ENCODE measurements at regions of chr5 and their contacts with region 1.

Region 1: DNA sequence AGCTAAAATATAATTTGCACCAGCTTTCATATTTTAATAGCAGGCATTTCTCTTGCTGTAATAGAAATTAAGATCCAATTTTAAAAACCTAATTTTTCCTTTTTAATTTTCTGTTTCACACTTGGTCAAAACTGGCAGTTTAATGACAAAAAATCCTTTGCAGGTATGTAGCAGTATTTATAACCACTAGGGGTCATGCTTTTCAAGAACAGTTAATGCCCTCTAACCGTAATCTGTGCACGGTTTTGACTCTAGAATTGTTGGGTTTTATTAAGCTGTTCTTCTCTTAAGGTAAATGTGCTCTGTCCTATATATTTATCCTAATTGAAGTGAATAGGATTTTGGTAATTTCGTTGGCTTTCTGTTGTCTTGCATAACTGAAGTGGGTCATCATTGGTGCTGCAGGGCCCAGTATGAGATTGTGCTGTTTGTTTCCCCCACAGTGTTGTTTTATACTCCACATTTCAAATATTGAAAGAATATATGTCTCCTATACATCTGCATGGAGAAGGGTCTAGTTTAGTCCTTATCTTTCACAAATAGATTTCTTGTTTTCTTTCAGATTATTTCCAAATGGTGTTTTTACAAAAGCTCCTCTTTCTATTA is 107.4 kb downstream of the SCAMP1 start:
- DNase-seq: no peak

Region 2: GRCh38 chr5:78359831-78360673 is 107.8 kb before region 1 on chr5 and contains the start of gene SCAMP1:
- intact Hi-C with region 1: loop called (anchors 10 kb)
- DNase-seq: peak; percentile 97
- total RNA-seq, gene SCAMP1: 29.1 TPM

Region 3: GRCh38 chr5:78377056-78377717 is 90.7 kb before region 1 on chr5:
- intact Hi-C with region 1: no loop called
- DNase-seq: no peak

Region 4: DNA sequence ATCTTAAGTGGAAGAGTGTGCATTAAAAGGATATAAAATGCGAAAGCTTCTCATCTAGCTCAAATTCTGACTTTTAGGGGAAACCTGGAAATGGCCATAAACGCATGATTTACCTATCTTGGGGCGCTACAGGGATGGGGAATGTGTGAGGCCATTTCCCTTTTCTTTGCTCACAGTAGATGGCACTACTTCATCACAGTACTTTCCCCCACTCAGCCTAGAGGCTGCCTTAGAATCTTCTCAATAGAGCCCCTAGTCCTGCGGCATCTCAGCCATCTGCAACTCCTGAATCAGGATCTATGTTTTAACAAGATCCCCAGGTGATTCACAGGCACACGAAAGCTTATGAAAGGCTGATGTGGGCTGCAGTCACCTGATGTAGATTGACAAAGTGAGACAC is 70.0 kb after region 1 on chr5:
- intact Hi-C with region 1: loop called (anchors 5 kb)
- DNase-seq: no peak

Region 5: DNA sequence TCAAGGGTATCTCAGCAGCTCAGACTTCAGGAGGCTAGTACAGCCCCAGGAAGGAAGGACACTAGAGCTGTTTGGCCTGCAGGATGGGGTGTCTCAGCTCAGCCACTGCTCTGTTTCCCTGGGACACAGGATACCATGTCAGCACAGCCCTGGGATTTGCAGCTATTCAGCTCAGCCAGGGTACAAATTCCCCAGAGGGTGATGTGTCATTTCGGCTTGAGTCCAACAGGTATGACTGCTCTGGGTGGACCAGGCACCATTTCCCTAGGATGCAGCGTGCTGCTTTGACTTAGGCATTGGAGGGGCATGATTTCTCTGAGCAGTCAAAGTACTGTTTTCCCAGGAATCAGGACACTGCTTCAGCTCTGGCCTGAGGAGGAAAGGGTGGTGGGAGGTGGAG is 387.2 kb after region 1 on chr5:
- intact Hi-C with region 1: no loop called
- DNase-seq: no peak

Region 6: GRCh38 chr5:78964887-78965286 is 497.0 kb after region 1 on chr5:
- intact Hi-C with region 1: loop called (anchors 5 kb)
- DNase-seq: no peak

Measured in cardiac septum (tissue), 1 donor.